Ovary (tissue), 10 donors: ENCODE measurements at regions of chr10 and their contacts with region 1.

Region 1: DNA sequence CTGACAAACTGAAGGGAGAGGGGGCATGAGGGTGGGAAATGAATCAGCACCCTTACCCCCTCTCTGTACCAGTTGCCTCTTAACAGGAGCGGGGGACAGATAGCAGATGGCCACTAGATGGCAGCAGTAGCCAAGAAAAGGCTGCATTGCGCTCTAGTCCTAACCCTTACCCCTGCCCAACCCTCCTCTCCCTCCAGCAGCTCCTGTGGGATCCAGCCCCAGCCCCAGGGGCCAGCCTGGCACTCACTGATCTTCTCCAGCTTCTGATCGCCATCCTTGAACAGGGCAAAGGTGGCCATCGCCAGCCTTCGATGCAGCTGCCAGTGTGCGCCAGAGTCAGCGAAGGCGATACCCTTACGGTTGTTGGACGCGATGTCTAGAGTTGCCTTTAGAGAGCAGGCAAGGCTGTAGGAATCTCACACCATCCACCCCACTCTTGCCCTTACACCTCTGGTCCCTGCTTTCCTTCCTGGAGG is 2.2 kb downstream of the CYP17A1 start:
- DNase-seq: peak; percentile 70 to 84 (median 80)
- H3K4me3 ChIP-seq: no peak overlapping the region
- H3K27ac ChIP-seq: no peak overlapping the region
- H3K4me1 ChIP-seq: no peaks in the 10 kb centered on the region
- H3K27me3 ChIP-seq: no peaks in the 10 kb centered on the region
- CTCF ChIP-seq: peak; percentile 74 to 87 (median 77)
- EP300 ChIP-seq: no peak
- POLR2A ChIP-seq: no peak

Region 2: DNA sequence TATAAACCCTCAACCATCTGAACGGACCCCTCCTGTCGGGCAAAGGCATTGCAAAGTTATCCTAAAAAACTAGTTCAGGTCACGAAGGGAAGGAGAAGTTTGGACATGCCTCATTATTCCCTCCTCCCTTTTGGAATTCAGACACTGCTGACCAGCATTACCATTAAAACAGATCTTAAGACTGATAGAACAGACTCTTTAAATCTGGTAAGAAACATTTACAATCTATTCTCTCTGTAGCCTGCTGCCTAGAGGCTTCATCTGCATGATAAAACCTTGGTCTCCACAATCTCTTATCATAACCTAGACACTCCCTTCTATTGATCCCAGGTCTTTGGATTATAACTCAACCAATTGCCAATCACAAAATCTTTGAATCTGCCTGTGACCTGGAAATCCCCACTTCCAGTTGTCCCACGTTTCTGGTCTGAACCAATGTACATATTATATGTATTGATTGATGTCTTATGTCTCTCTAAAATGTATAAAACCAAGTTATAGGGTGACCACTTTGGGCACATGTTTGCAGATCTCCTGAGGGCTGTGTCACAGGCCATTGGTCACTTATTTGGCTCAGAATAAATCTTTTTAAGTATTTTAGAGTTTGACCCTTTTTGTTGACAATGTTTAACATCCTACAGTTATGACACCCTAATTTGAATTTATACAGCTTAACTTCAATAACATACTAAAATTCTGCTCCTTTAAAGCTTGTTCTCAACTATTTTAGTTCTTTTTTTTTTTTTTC is 59.6 kb after region 1 on chr10:
- intact Hi-C with region 1: loop called in 2 of 4 experiments (anchors 5 kb)
- DNase-seq: no peak
- H3K4me3 ChIP-seq: no peak overlapping the region
- H3K27ac ChIP-seq: no peak overlapping the region
- H3K4me1 ChIP-seq: no peaks in the 10 kb centered on the region
- H3K27me3 ChIP-seq: no peaks in the 10 kb centered on the region
- CTCF ChIP-seq: no peak
- EP300 ChIP-seq: no peak
- POLR2A ChIP-seq: no peak

Region 3: DNA sequence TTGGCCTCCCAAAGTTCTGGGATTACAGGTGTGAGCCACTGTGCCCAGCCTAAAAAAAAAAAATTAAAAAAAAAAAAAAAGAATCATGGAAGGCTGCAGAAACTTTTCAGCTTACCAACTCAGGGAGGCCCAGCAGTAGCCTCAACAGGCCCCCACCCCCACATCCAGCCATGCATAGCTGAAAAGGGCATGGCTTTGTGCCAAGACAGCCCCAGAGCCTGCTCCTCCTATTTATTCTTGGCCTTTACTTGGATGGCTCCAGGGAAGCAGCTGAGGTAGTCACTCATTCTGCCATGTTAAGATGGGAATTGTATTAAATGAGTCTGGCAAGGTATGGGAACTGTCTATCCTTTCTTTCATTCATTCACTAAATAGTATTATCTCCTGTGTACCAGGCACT is 69.3 kb after region 1 on chr10:
- intact Hi-C with region 1: loop called (anchors 5 to 10 kb)
- DNase-seq: no peak
- H3K4me3 ChIP-seq: no peak overlapping the region
- H3K27ac ChIP-seq: no peak overlapping the region
- H3K4me1 ChIP-seq: no peaks in the 10 kb centered on the region
- H3K27me3 ChIP-seq: no peaks in the 10 kb centered on the region
- CTCF ChIP-seq: no peak
- EP300 ChIP-seq: no peak
- POLR2A ChIP-seq: no peak

Region 4: GRCh38 chr10:103069453-103070331 is 234.6 kb after region 1 on chr10:
- intact Hi-C with region 1: loop called in 3 of 4 experiments (anchors 5 to 10 kb)
- DNase-seq: peak; percentile 54 to 75 (median 73)
- H3K4me3 ChIP-seq: no peak overlapping the region
- H3K27ac ChIP-seq: no peak overlapping the region
- H3K4me1 ChIP-seq: no peaks in the 10 kb centered on the region
- H3K27me3 ChIP-seq: no peaks in the 10 kb centered on the region
- CTCF ChIP-seq: peak; percentile 70 to 74 (median 73)
- EP300 ChIP-seq: no peak
- POLR2A ChIP-seq: no peak

Region 5: DNA sequence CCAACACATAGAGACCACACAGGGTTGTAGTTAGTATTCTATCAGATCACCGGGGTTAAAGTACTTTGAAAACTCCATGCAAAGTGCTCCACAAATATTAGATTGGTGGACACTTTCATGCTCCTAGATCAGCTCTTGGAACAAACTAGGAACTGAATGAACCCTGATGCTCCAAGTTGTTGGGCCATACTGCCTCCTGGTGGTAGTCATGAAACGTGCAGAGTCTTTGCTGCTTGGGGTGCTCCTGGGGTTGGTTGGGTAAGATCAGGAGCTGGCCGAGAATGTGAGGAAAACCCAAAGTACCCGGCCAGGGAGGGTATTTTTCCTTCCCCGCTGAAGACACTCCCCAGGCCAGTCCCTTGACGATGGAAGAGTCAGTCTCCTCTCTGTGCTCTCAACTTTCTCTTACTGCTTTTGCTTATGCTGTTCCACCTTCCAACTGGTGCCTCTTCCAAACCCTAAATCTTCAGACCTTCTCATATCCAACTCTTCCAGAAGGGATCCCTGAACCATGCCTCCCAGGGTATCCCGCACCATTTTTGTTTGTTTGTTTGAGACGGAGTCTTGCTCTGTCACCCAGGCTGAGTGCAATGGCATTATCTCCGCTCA is 409.7 kb after region 1 on chr10:
- intact Hi-C with region 1: loop called in 1 of 4 experiments (anchors 10 kb)
- DNase-seq: peak; percentile 56 to 81 (median 58)
- H3K4me3 ChIP-seq: no peak overlapping the region
- H3K27ac ChIP-seq: no peak overlapping the region
- H3K4me1 ChIP-seq: no peaks in the 10 kb centered on the region
- H3K27me3 ChIP-seq: no peaks in the 10 kb centered on the region
- CTCF ChIP-seq: peak; percentile 29 to 80 (median 57)
- EP300 ChIP-seq: no peak
- POLR2A ChIP-seq: no peak